Prostate gland (tissue), 2 donors: ENCODE measurements at regions of chr5 and their contacts with region 1.

Region 1: DNA sequence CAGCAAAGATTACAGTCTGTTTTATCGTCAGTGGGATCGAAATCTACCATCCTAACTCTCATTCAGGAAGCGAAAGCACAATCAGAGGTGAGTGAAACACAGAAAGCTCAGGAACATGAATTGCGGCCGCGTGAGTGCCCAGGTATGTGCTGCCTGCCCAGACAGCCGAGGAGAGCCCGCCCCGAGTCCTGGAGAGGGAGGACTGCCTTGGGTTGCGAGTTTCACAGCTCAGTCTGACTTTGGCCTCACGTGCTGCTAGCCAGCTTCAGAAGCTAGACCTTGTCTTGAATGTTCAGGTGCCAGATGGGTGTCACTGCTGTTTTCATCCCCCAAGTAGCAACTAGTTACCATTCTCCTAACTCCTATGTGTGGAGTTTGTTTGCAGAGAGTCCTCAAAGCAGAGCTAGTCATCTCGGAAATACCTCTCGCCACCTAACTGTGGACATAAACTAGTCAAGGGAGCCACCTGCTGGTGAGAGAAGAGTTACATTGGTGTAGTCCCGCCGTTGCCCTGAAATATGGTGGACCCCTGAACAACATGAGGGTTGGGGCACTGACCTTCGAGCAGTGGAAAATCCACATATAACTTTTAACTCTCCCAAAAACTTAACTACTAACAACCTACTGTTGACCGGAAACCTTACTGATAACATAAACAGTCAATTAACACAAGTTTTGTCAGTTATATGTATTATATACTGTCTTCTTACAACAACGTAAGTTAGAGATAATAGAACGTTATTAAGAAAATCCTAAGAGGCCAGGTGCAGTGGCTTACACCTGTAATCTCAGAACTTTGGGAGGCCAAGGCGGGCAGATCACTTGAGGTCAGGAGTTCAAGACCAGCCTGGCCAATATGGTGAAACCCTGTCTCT is 80.9 kb downstream of the GOLPH3 start:
- DNase-seq: peak; percentile 78
- H3K4me3 ChIP-seq: no peak overlapping the region
- H3K27ac ChIP-seq: no peak overlapping the region
- H3K4me1 ChIP-seq: no peaks in the 10 kb centered on the region
- H3K27me3 ChIP-seq: no peaks in the 10 kb centered on the region
- CTCF ChIP-seq: peak; percentile 48 to 84 (median 72)
- POLR2A ChIP-seq: no peak

Region 2: GRCh38 chr5:31581498-31582099 is 511.6 kb before region 1 on chr5:
- intact Hi-C with region 1: loop called (anchors 10 kb)
- DNase-seq: no peak
- H3K4me3 ChIP-seq: no peak overlapping the region
- H3K27ac ChIP-seq: no peak overlapping the region
- H3K4me1 ChIP-seq: no peaks in the 10 kb centered on the region
- H3K27me3 ChIP-seq: no peaks in the 10 kb centered on the region
- CTCF ChIP-seq: peak in 3 of 4 experiments; percentile 58 to 70 (median 62)
- POLR2A ChIP-seq: no peak

Region 3: GRCh38 chr5:31825518-31826068 is 267.6 kb before region 1 on chr5:
- intact Hi-C with region 1: loop called (anchors 2 kb)
- DNase-seq: peak; percentile 65
- H3K4me3 ChIP-seq: no peak overlapping the region
- H3K27ac ChIP-seq: no peak overlapping the region
- H3K4me1 ChIP-seq: no peaks in the 10 kb centered on the region
- H3K27me3 ChIP-seq: no peaks in the 10 kb centered on the region
- CTCF ChIP-seq: peak in 3 of 4 experiments; percentile 67 to 72 (median 72)
- POLR2A ChIP-seq: no peak

Region 4: DNA sequence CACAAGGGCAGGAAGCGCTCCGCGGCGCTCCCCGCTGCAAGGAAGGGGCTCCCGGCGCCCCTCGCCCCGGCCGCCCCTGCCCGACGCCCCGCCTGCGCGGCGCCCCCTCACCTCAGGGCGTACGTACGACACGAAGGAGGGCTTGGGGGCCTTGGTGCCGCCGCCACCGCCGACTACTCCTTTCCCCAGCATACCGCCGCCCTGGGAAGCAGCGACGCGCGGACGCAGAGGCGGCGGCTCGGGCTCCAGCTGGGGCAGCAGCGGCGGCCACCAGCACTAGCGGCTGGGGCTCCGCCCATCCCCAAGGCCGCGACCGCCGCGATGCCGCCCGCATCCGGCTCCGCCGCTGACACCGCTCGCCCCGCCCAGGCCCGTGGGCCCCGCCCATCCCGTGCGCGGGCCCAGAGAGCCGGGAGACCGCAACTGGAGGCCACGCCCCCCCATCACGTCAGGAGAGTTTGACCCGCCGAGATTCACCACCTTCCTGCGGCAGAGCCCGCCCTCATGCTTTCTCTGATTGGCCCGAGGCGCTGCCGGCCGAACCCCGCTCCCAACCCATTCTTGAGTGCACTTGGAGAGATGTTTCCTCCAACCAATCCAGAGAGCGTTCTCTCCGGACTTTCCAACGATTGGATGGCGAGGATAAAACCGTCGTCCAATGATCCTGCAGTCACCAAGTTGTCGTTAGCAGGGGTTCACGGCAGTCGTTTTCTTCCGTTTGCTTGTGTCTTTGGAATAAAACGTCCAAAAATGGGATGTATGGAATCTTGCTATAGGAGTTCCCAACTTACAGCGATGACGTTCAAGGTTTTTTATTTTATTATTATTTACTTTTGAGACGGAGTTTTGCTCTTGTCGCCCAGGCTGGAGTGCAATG is 219.7 kb after region 1 on chr5 and contains the start of gene MTMR12:
- intact Hi-C with region 1: loop called (anchors 10 kb)
- DNase-seq: peak; percentile 100
- H3K4me3 ChIP-seq: peak within 1 kb of the TSS; percentile 96 to 98
- H3K27ac ChIP-seq: peak within 1 kb of the TSS; percentile 98 to 99
- H3K4me1 ChIP-seq: no peaks in the 10 kb centered on the region
- H3K27me3 ChIP-seq: no peaks in the 10 kb centered on the region
- CTCF ChIP-seq: no peak
- POLR2A ChIP-seq: peak; percentile 94
- total RNA-seq, gene MTMR12: 43.1 to 70.7 TPM